Panc1 (cell line): ENCODE measurements at regions of chr1 and their contacts with region 1.

Region 1: DNA sequence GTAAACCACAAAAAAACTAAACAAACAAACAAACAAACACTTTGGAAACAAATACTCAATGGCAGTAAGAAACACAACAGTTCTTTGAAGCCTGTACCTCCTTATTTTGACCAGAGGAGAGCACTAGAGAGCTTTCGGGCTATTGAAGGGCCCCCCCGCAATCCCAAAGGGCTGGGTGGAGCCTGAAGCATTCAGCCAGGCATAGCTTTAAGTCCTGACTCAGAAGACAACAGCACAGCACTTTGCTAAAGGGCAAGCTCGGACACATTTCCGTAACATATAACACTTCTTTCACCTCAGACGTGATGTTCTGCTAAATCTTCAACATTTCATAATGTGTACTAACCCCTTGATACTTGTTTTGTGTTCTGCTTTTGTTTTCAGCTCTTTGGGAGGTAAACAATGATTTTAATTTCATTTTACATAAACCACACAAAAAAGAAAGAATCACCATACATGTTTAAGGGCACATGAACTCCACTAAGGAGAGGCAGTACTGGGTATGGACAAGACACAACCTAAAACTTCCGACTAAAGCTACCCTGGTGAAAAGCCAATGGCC is 9.7 kb upstream of the SHCBP1L start:
- DNase-seq: peak; percentile 68
- ATAC-seq: peak; percentile 98
- H3K4me3 ChIP-seq: peak overlapping the region; percentile 10 to 29; a peak in 3 of 4 replicates
- H3K27ac ChIP-seq: peak overlapping the region; percentile 68; the same call in 1 of the 2 replicates
- H3K4me1 ChIP-seq: peaks cover 5% of the 10 kb centered on the region
- H3K27me3 ChIP-seq: no peaks in the 10 kb centered on the region; the same call in none of the 2 replicates
- CTCF ChIP-seq: peak; percentile 96

Region 2: DNA sequence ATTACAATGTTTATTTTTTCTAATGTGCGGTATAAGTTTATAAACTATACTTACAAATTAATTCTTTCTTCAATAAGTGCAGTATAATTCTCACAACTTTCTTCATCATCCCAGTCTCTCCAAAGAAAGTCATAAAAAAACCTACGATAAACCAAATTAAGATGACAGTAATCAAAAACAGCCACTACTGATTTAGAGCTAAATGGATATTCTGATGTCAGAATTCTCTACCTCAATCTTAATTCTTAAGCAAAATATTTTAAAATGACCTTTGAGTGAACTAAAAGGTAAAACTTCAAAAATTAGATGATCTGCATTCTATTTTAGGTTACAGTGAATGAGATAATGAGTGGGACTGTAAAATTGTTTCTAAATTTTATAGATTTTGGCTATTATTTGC is 23.2 kb before region 1 on chr1:
- CTCF ChIA-PET with region 1: no interaction called
- POLR2A ChIA-PET with region 1: interaction called, 11 read pairs
- in situ Hi-C with region 1: no loop called
- intact Hi-C with region 1: no loop called
- DNase-seq: no peak
- ATAC-seq: no peak
- H3K4me3 ChIP-seq: no peak overlapping the region
- H3K27ac ChIP-seq: no peak overlapping the region
- H3K4me1 ChIP-seq: no peaks in the 10 kb centered on the region
- H3K27me3 ChIP-seq: 0 out of 2 replicates have a peak, but pooled peaks cover 4% of the 10 kb centered on the region
- CTCF ChIP-seq: no peak

Region 3: GRCh38 chr1:183023601-183024316 is 61.1 kb after region 1 on chr1:
- CTCF ChIA-PET with region 1: interaction called, 5 read pairs
- POLR2A ChIA-PET with region 1: no interaction called
- in situ Hi-C with region 1: no loop called
- intact Hi-C with region 1: loop called (anchors 1 kb)
- DNase-seq: no peak
- ATAC-seq: peak; percentile 87
- H3K4me3 ChIP-seq: peak overlapping the region; percentile 61 to 83
- H3K27ac ChIP-seq: peak overlapping the region; percentile 81
- H3K4me1 ChIP-seq: peaks cover 53% of the 10 kb centered on the region
- H3K27me3 ChIP-seq: no peaks in the 10 kb centered on the region
- CTCF ChIP-seq: peak; percentile 80

Region 4: DNA sequence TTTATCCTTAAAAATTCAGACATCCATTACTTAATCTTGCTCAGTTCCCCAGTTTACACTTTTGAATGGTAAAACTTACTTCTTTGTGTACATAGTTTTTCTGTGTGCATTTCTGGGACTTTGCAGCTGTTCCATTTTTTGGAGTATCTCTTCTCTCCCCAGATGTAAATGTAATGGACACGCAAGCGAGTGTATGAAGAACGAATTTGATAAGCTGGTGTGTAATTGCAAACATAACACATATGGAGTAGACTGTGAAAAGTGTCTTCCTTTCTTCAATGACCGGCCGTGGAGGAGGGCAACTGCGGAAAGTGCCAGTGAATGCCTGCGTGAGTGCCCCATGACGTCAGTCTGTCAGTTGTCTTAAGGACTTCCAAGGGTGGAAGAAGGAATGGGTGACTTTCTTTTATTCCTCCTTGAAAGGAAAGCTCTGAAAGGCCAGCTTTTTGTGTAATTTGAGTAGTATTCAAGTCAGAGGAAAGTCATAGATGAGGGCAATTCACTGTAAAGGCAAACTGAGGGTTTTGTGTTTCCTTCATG is 147.8 kb after region 1 on chr1:
- CTCF ChIA-PET with region 1: no interaction called
- POLR2A ChIA-PET with region 1: interaction called, 6 read pairs
- in situ Hi-C with region 1: no loop called
- intact Hi-C with region 1: loop called (anchors 10 kb)
- DNase-seq: no peak
- ATAC-seq: no peak
- H3K4me3 ChIP-seq: no peak overlapping the region
- H3K27ac ChIP-seq: no peak overlapping the region
- H3K4me1 ChIP-seq: no peaks in the 10 kb centered on the region
- H3K27me3 ChIP-seq: no peaks in the 10 kb centered on the region
- CTCF ChIP-seq: no peak

Region 5: DNA sequence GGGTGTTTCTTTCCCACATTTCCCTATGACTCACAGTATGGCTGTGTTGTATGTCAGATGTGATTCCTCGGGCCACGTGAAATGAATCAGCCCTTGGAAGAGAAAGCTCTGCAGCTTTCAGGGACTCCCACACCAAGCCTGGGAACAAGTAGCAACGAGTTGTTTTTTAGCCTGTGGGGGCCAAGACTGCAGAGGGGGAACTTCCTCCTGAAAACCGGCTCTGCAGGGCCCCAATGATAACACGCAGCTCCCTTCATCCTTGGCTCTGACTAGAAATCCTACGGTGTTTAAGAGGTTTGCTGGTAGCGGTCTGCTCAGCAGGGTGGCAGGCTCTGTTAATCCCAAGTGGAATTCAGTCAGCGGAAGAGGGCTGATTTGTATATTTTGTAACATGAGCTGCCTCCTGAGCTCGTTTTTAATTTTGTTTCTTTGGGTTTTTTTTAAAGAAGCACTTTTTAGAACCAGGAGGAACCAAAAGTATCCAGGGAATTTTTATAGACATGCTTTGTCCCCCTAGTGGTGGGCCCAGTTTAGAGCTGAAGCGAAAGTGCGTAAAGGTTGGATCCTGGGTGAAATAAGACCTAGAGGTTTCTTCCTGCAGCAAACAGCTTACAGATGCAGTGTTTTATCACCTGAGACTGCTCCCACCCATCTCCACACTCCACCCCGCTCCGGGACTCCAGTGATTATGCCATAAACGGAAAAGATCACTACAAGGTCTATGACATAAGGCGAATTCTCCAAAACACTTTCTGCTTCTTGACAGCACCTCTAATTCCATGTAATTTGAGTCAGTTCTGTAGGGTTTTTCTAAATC is 272.2 kb after region 1 on chr1:
- CTCF ChIA-PET with region 1: interaction called, 3 read pairs
- POLR2A ChIA-PET with region 1: no interaction called
- in situ Hi-C with region 1: no loop called
- intact Hi-C with region 1: loop called (anchors 2 kb)
- DNase-seq: peak; percentile 81
- ATAC-seq: peak; percentile 89
- H3K4me3 ChIP-seq: peak overlapping the region; percentile 32 to 53
- H3K27ac ChIP-seq: peak overlapping the region; percentile 78
- H3K4me1 ChIP-seq: peaks cover 15% of the 10 kb centered on the region
- H3K27me3 ChIP-seq: no peaks in the 10 kb centered on the region
- CTCF ChIP-seq: peak; percentile 86

Region 6: GRCh38 chr1:183246436-183246835 is 283.8 kb after region 1 on chr1:
- CTCF ChIA-PET with region 1: no interaction called
- POLR2A ChIA-PET with region 1: no interaction called
- in situ Hi-C with region 1: no loop called
- intact Hi-C with region 1: no loop called
- DNase-seq: no peak
- ATAC-seq: no peak
- H3K4me3 ChIP-seq: no peak overlapping the region
- H3K27ac ChIP-seq: no peak overlapping the region
- H3K4me1 ChIP-seq: no peaks in the 10 kb centered on the region
- H3K27me3 ChIP-seq: no peaks in the 10 kb centered on the region
- CTCF ChIP-seq: no peak

Region 7: DNA sequence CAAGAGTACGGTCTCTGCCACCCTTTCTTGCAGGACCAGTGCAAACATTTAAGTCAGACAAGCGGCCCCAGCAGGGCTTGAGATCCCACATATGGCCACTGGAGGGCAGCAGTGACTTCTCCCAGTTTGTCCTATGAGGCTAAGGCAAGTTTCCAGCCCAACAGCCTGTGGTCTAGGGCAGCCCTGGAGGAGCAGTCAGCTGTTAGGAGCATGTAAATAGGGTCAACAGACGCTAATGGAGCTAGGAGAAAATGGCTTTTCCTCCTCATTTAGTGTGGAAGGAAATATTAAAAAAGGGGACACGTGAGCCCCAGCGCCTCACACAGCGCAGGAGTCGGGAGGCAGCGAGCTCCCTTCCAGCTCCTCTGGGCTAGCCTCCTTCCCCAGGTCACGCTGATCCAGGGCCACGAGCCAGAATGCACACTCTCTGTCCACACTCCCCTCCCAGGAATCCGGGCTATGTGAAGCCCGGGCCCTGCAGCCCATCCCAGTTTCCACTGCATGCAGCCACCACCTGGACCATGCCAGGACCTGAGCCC is 319.0 kb after region 1 on chr1:
- CTCF ChIA-PET with region 1: no interaction called
- POLR2A ChIA-PET with region 1: no interaction called
- in situ Hi-C with region 1: no loop called
- intact Hi-C with region 1: loop called (anchors 5 kb)
- DNase-seq: peak; percentile 88
- ATAC-seq: peak; percentile 90
- H3K4me3 ChIP-seq: no peak overlapping the region
- H3K27ac ChIP-seq: no peak overlapping the region
- H3K4me1 ChIP-seq: no peaks in the 10 kb centered on the region; the same call in 1 of the 2 replicates
- H3K27me3 ChIP-seq: no peaks in the 10 kb centered on the region
- CTCF ChIP-seq: peak; percentile 96